ENCODE measurements at regions of chr5 and their contacts with region 1.

Region 1: DNA sequence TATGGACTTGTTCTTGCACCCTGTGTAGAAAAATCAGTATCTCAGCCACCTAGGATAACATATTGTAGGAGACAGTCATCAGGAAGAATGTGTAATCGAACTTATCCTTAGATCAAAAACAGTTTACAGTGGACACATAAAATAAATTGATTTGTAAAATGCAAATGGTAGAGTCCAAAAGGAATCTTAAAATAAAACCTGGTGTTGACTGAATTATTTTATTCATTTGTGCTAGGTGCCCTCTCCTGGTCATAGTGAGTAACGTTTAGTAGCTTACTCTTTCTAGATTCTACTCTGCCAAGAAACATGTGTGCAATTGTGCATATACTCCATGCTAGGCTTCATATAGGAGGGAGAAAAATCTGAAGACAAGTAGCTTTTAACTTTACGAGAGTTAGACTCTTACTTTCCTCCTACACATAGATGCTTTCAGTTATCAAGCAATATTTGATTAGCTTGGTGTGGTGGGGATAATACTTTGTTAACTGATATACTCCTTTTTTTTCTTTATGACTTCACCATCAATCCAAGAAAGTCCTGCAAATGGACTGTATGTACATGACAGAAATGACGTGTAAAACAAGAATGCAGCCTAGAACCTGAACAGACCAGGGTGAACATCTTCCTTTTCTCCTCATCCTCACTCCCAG is 23.7 kb upstream of the LOX start:
- DNase-seq: no peak
- H3K4me3 ChIP-seq: no peak overlapping the region
- H3K27ac ChIP-seq: no peak overlapping the region
- H3K4me1 ChIP-seq: no peaks in the 10 kb centered on the region
- H3K27me3 ChIP-seq: no peaks in the 10 kb centered on the region
- CTCF ChIP-seq: peak; percentile 46

Region 2: GRCh38 chr5:121867401-121867800 is 234.4 kb before region 1 on chr5:
- intact Hi-C with region 1: no loop called
- DNase-seq: no peak
- H3K4me3 ChIP-seq: no peak overlapping the region
- H3K27ac ChIP-seq: no peak overlapping the region
- H3K4me1 ChIP-seq: no peaks in the 10 kb centered on the region
- H3K27me3 ChIP-seq: no peaks in the 10 kb centered on the region
- CTCF ChIP-seq: no peak

Region 3: DNA sequence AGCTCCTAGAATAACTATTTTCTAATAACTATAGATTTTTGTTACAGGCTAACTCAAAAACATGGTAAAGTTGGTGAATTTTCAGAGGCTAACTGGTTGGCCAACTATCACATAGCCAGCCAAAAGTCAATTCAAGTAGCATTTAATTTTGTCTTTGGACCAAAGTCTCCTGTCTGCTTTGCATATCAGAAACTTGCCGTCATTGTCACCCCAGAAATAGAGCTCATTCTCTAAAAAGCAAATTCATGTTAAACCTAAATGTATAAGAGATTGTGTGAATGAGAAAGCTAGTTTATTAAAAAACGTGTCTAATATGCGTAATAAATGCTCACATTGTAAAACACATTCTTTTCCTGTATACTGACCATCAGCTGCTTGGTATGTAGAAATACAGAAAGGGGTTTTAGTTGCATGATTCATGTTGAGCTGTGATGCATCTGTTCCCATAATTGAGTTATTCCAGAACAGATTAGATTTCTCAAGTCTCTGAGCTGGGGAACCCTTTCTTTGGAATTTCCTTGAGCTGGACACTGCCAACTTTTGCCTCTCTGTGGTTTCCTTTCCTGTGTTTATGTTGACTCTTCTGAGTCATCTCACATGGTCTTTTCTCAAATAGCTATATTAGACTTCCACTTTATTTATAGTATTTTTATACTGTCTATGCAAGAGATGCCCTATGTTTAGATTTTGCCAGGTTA is 132.7 kb before region 1 on chr5:
- intact Hi-C with region 1: loop called (anchors 10 kb)
- DNase-seq: no peak
- H3K4me3 ChIP-seq: no peak overlapping the region
- H3K27ac ChIP-seq: peak overlapping the region; percentile 56
- H3K4me1 ChIP-seq: peaks cover 3% of the 10 kb centered on the region
- H3K27me3 ChIP-seq: no peaks in the 10 kb centered on the region
- CTCF ChIP-seq: no peak